Activated CD8-positive, alpha-beta T cell treated with anti-CD3 and anti-CD28 coated beads, Interleukin-2, amount 10 ng/mL, durations not matched to agents 7 days and 5 days (primary cell): ENCODE measurements at regions of chr12 and their contacts with region 1.

Region 1: DNA sequence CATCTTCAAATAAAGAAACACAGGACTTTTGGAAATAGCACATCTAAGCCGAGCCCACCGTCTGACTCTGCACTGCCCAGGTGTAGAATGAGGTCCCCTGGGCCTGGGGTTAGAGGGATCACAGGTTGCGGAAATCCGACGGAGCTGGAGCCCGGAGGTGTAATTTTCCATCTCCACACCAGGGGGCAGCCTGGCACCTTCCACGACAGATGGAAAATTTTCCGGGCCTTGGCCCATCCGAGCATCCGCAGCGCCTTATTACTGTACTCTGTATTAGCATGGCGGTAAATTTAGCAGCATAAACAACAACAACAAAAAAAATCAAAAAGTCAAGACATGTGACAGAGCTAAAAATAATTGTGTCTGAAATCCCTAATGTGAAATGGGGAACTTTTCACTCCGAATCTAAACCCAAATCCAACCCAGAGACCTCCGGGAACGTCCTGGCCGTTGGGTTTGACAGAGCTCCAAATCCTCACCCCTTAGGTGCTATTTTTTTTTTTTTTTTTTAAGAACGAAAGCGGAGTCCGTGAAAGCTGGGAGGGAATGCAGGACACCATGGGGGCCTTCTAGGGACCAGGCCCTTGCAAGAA is 93.9 kb downstream of the KSR2 start:
- DNase-seq: peak; percentile 68
- ATAC-seq: peak; percentile 68
- H3K4me3 Mint-ChIP-seq: no peak overlapping the region
- H3K27ac Mint-ChIP-seq: no peak overlapping the region
- H3K4me1 Mint-ChIP-seq: peaks cover 6% of the 10 kb centered on the region
- H3K27me3 Mint-ChIP-seq: peaks cover 9% of the 10 kb centered on the region

Region 2: GRCh38 chr12:117857632-117858612 is 17.0 kb before region 1 on chr12:
- CTCF ChIA-PET with region 1: interaction called, 23 read pairs
- POLR2A ChIA-PET with region 1: no interaction called
- DNase-seq: peak; percentile 64
- ATAC-seq: peak; percentile 44
- H3K4me3 Mint-ChIP-seq: no peak overlapping the region
- H3K27ac Mint-ChIP-seq: no peak overlapping the region
- H3K4me1 Mint-ChIP-seq: no peaks in the 10 kb centered on the region
- H3K27me3 Mint-ChIP-seq: no peaks in the 10 kb centered on the region

Region 3: GRCh38 chr12:118055144-118055557 is 180.2 kb after region 1 on chr12:
- CTCF ChIA-PET with region 1: interaction called, 13 read pairs
- POLR2A ChIA-PET with region 1: no interaction called
- DNase-seq: peak; percentile 85
- ATAC-seq: peak; percentile 86
- H3K4me3 Mint-ChIP-seq: no peak overlapping the region
- H3K27ac Mint-ChIP-seq: no peak overlapping the region
- H3K4me1 Mint-ChIP-seq: peaks cover 33% of the 10 kb centered on the region
- H3K27me3 Mint-ChIP-seq: no peaks in the 10 kb centered on the region